IMR-90 (cell line): ENCODE measurements at regions of chr10 and their contacts with region 1.

Region 1: DNA sequence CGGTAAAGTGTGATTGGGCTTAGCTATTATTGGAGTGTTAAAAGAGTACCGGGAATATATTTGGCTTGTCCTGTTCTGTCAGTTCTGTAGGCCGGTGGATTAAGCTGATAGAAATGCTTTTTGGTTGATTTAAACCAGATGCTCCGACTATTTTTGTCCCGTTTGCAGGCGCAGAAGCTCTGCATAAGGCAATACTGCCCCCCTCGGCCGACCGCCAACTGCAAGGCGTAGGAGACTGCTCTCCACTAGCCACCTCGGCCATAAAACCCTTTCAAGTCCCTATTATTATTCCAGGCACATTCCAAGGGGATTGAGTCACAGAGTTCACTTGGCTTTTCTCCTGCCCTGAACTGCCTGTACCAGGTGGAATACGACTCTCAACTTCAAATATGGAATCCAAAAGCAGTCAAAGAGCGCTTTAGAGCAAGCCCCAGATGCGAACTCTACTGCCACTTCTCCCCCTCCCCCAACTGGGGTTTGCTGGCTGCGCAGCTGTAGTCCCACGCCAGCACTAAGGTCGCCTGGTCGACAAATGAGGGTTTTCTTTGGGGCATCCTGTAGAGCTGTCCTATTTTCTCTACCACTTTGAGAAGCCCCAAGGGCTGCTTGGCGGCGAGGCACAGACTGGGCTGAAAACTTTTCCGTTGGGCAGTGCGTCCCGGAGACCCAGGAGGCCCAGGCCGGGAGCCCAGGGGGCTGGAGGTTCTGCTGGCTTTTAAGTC is 108.3 kb downstream of the REEP3 start:
- DNase-seq: peak; percentile 99
- ATAC-seq: peak; percentile 64
- H3K4me3 ChIP-seq: peak overlapping the region; percentile 86
- H3K27ac ChIP-seq: peak overlapping the region; percentile 98
- H3K4me1 ChIP-seq: 0 out of 2 replicates have a peak, but pooled peaks cover 3% of the 10 kb centered on the region
- H3K27me3 ChIP-seq: no peaks in the 10 kb centered on the region
- CTCF ChIP-seq: peak; percentile 93
- POLR2A ChIP-seq: peak; percentile 89
- RAD21 ChIP-seq: peak; percentile 96

Region 2: GRCh38 chr10:62594093-62594520 is 1035.4 kb before region 1 on chr10:
- CTCF ChIA-PET with region 1: no interaction called
- POLR2A ChIA-PET with region 1: no interaction called
- dilution Hi-C with region 1: no loop called
- in situ Hi-C with region 1: no loop called
- intact Hi-C with region 1: loop called (anchors 10 kb)
- DNase-seq: peak; percentile 56
- ATAC-seq: peak; percentile 96
- H3K4me3 ChIP-seq: no peak overlapping the region
- H3K27ac ChIP-seq: no peak overlapping the region
- H3K4me1 ChIP-seq: no peaks in the 10 kb centered on the region
- H3K27me3 ChIP-seq: no peaks in the 10 kb centered on the region
- CTCF ChIP-seq: peak; percentile 93
- POLR2A ChIP-seq: no peak
- RAD21 ChIP-seq: peak; percentile 93

Region 3: GRCh38 chr10:63192826-63193225 is 436.7 kb before region 1 on chr10:
- CTCF ChIA-PET with region 1: no interaction called
- POLR2A ChIA-PET with region 1: no interaction called
- dilution Hi-C with region 1: no loop called
- in situ Hi-C with region 1: loop called (anchors 5 kb)
- intact Hi-C with region 1: no loop called
- DNase-seq: no peak
- ATAC-seq: no peak
- H3K4me3 ChIP-seq: no peak overlapping the region
- H3K27ac ChIP-seq: no peak overlapping the region
- H3K4me1 ChIP-seq: peaks cover 7% of the 10 kb centered on the region
- H3K27me3 ChIP-seq: no peaks in the 10 kb centered on the region
- CTCF ChIP-seq: no peak
- POLR2A ChIP-seq: no peak
- RAD21 ChIP-seq: no peak

Region 4: GRCh38 chr10:63217120-63217605 is 412.4 kb before region 1 on chr10:
- CTCF ChIA-PET with region 1: interaction called, 6 read pairs
- POLR2A ChIA-PET with region 1: no interaction called
- dilution Hi-C with region 1: no loop called
- in situ Hi-C with region 1: no loop called
- intact Hi-C with region 1: loop called (anchors 1 kb)
- DNase-seq: peak; percentile 77
- ATAC-seq: peak; percentile 95
- H3K4me3 ChIP-seq: no peak overlapping the region
- H3K27ac ChIP-seq: no peak overlapping the region
- H3K4me1 ChIP-seq: no peaks in the 10 kb centered on the region
- H3K27me3 ChIP-seq: no peaks in the 10 kb centered on the region
- CTCF ChIP-seq: peak; percentile 66
- POLR2A ChIP-seq: no peak
- RAD21 ChIP-seq: peak; percentile 65

Region 5: GRCh38 chr10:63416376-63416775 is 213.1 kb before region 1 on chr10:
- CTCF ChIA-PET with region 1: interaction called, 5 read pairs
- POLR2A ChIA-PET with region 1: no interaction called
- dilution Hi-C with region 1: no loop called
- in situ Hi-C with region 1: no loop called
- intact Hi-C with region 1: loop called (anchors 5 kb)
- DNase-seq: peak; percentile 43
- ATAC-seq: no peak
- H3K4me3 ChIP-seq: no peak overlapping the region
- H3K27ac ChIP-seq: no peak overlapping the region
- H3K4me1 ChIP-seq: peaks cover 3% of the 10 kb centered on the region
- H3K27me3 ChIP-seq: no peaks in the 10 kb centered on the region
- CTCF ChIP-seq: no peak
- POLR2A ChIP-seq: no peak
- RAD21 ChIP-seq: no peak

Region 6: DNA sequence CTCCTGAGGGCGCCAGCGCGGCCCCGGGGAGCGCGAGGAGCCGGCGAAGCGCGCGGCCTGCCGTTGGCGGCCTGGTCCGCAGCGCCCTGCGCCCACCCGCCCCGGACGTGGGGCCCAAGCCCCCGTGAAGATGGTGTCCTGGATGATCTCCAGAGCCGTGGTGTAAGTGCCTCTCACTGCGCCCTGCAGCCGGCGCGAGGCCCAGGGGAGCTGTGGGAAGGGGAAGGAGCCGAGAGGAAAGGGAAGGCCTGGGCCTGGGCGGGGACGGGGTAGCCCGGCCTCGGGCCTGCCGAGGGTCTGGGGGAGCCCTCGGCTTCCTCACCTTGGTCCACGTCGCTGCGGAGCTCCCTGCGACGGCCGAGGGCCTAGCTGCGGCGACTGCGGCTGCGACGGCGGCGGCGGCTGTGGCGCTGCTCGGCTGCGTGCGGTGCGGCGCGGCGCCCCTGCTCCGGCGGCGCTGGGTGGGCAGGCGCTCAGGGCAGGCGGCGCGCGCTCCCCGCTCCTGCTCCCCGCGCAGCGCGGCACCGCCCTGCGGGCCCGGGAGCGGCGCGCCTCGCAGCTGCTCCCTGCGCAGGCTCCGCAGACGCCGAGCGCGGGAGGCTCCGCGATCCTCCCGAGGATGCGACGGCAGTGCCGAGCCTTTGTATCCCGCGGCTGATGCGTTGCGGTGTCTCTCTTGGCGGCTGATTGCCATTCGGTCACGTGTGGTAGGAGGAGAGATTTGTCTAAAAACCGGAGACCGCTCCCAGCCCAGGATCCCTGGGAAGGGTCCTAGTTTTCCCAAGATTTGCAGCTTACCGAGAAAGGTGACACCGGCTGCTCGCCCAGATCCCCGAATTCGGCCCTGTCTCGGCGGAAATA is 107.9 kb before region 1 on chr10:
- CTCF ChIA-PET with region 1: no interaction called
- POLR2A ChIA-PET with region 1: interaction called, 4 read pairs
- dilution Hi-C with region 1: no loop called
- in situ Hi-C with region 1: no loop called
- intact Hi-C with region 1: loop called (anchors 1 kb)
- DNase-seq: peak; percentile 75
- ATAC-seq: peak; percentile 87
- H3K4me3 ChIP-seq: peak overlapping the region; percentile 79
- H3K27ac ChIP-seq: peak overlapping the region; percentile 95
- H3K4me1 ChIP-seq: peaks cover 6% of the 10 kb centered on the region
- H3K27me3 ChIP-seq: no peaks in the 10 kb centered on the region
- CTCF ChIP-seq: no peak
- POLR2A ChIP-seq: peak; percentile 29; the same call in 1 of the 2 replicates
- RAD21 ChIP-seq: no peak

Region 7: DNA sequence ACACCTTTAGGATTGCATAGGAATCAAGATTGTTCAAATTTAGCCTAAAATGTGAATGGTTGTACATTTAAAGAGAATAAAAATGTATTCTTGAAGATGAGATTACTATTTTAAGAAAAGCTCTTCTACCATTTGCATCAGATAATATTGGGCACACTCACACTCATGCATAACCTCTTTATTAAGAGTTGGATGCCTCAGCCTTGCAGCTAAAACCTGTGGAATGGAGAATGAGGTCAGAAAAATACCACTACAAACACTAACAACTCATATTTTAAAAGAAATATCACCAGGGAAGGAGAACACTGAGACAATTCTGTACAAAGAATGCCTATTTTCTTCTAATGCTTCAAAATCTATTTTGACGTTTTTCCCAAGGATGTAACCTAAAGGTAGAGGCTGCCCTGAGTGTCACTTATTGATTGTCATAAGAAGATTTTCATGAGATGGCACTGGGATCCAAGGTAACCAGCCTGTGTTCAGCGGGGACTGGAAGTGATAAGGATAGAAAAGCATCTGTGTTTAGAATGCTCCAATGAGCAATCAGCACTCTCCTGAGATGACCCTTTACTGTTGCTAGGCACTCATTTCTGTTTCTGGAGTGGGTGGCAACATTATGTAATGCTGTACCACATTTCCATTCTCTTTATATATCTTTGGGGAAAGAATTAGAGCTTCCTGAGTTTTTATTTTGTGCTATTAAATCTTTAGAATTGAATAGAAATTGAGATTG is 81.7 kb before region 1 on chr10:
- CTCF ChIA-PET with region 1: no interaction called
- POLR2A ChIA-PET with region 1: no interaction called
- dilution Hi-C with region 1: no loop called
- in situ Hi-C with region 1: no loop called
- intact Hi-C with region 1: no loop called
- DNase-seq: peak; percentile 59
- ATAC-seq: peak; percentile 73
- H3K4me3 ChIP-seq: no peak overlapping the region
- H3K27ac ChIP-seq: no peak overlapping the region
- H3K4me1 ChIP-seq: peaks cover 4% of the 10 kb centered on the region
- H3K27me3 ChIP-seq: no peaks in the 10 kb centered on the region
- CTCF ChIP-seq: no peak
- POLR2A ChIP-seq: no peak
- RAD21 ChIP-seq: no peak

Region 8: GRCh38 chr10:63711867-63712716 is 82.6 kb after region 1 on chr10:
- CTCF ChIA-PET with region 1: interaction called, 35 read pairs
- POLR2A ChIA-PET with region 1: no interaction called
- dilution Hi-C with region 1: no loop called
- in situ Hi-C with region 1: loop called (anchors 5 kb)
- intact Hi-C with region 1: loop called (anchors 1 kb)
- DNase-seq: peak; percentile 97
- ATAC-seq: peak; percentile 79
- H3K4me3 ChIP-seq: no peak overlapping the region
- H3K27ac ChIP-seq: no peak overlapping the region
- H3K4me1 ChIP-seq: peaks cover 17% of the 10 kb centered on the region
- H3K27me3 ChIP-seq: no peaks in the 10 kb centered on the region
- CTCF ChIP-seq: no peak
- POLR2A ChIP-seq: no peak
- RAD21 ChIP-seq: no peak